HCT116 (cell line): ENCODE measurements at regions of chr2 and their contacts with region 1.

Region 1: DNA sequence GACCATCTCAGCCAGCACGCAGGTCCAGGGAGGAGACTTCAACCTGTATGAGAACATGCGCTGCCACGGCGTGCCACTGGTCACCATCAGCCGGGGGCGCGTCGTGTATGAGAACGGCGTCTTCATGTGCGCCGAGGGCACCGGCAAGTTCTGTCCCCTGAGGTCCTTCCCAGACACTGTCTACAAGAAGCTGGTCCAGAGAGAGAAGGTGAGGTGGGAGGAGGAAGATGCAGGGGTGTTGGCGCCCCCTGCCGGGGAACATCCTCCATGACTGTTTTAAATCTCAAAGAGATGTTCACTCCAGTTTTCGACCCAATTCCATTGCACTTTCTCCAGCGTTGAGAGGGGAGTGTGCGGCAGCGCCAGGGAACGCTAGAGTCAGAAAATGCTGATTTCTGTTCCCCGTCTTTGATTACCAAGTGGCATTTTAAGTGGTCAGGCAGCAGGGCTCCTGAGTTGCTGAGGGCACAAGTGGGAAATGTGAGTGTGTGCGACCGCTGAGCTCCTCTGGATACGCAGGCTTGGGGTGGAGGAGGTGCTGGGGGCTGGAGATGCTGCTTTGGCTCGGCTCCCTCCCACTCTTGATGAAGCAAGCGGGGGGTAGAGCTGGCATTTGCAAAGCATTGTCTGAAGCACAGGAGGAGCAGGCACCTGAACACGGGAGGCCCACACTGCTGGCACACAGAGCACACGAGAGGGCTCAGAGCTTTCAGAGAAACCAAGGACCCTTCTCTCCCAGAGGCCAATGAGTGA is 27.7 kb upstream of the MAPRE3 start:
- DNase-seq: peak; percentile 50
- ATAC-seq: peak; percentile 88
- H3K4me3 ChIP-seq: no peak overlapping the region
- H3K27ac ChIP-seq: no peak overlapping the region
- H3K4me1 ChIP-seq: peaks cover 0 to 16% of the 10 kb centered on the region in 2 experiments; a peak in 3 of 4 replicates
- H3K27me3 ChIP-seq: no peaks in the 10 kb centered on the region
- CTCF ChIP-seq: peak; percentile 80 to 90 (median 81)
- POLR2A ChIP-seq: no peak
- RAD21 ChIP-seq: peak; percentile 86

Region 2: GRCh38 chr2:26605195-26605998 is 337.3 kb before region 1 on chr2:
- CTCF ChIA-PET with region 1: no interaction called
- POLR2A ChIA-PET with region 1: no interaction called
- RAD21 ChIA-PET with region 1: no interaction called
- intact Hi-C with region 1: loop called (anchors 5 kb)
- DNase-seq: peak; percentile 61
- ATAC-seq: peak; percentile 88
- H3K4me3 ChIP-seq: no peak overlapping the region
- H3K27ac ChIP-seq: no peak overlapping the region
- H3K4me1 ChIP-seq: peaks cover 14 to 26% of the 10 kb centered on the region in 2 experiments; a peak in 3 of 4 replicates
- H3K27me3 ChIP-seq: no peaks in the 10 kb centered on the region
- CTCF ChIP-seq: peak; percentile 84 to 90 (median 86)
- POLR2A ChIP-seq: no peak
- RAD21 ChIP-seq: peak; percentile 98

Region 3: GRCh38 chr2:26901326-26902183 is 41.2 kb before region 1 on chr2:
- CTCF ChIA-PET with region 1: no interaction called
- POLR2A ChIA-PET with region 1: no interaction called
- RAD21 ChIA-PET with region 1: no interaction called
- intact Hi-C with region 1: no loop called
- DNase-seq: no peak
- ATAC-seq: no peak
- H3K4me3 ChIP-seq: no peak overlapping the region
- H3K27ac ChIP-seq: no peak overlapping the region
- H3K4me1 ChIP-seq: no peaks in the 10 kb centered on the region
- H3K27me3 ChIP-seq: no peaks in the 10 kb centered on the region
- CTCF ChIP-seq: no peak
- POLR2A ChIP-seq: no peak
- RAD21 ChIP-seq: no peak

Region 4: GRCh38 chr2:26922405-26923188 is 20.1 kb before region 1 on chr2:
- CTCF ChIA-PET with region 1: interaction called, 14 read pairs
- POLR2A ChIA-PET with region 1: no interaction called
- RAD21 ChIA-PET with region 1: no interaction called
- intact Hi-C with region 1: no loop called
- DNase-seq: peak; percentile 47
- ATAC-seq: peak; percentile 99
- H3K4me3 ChIP-seq: no peak overlapping the region
- H3K27ac ChIP-seq: no peak overlapping the region
- H3K4me1 ChIP-seq: peaks cover 4 to 9% of the 10 kb centered on the region in 2 experiments; a peak in 1 of 4 replicates
- H3K27me3 ChIP-seq: no peaks in the 10 kb centered on the region
- CTCF ChIP-seq: peak; percentile 69 to 83 (median 74)
- POLR2A ChIP-seq: no peak
- RAD21 ChIP-seq: peak; percentile 68